Naive thymus-derived CD4-positive, alpha-beta T cell (primary cell): ENCODE measurements at regions of chr6 and their contacts with region 1.

Region 1: DNA sequence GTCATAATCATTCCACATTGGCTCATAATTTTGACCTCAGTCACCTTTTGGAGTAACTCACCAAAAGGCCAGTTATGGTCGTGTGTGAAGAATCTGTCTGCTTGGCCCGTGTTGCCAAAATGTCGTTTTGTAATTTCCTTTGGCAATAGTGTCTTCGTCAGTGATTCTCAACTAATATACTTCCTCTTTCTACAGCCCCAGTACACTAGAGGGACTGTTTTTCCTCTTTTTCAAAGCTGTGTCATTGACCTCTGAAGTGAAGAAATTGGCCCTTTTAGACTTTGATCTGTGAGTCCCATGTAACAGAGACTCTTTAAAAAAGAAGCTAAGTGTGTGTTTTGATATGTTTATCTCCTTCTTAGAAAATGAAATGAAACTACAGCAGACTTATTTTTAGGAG is 5.2 kb downstream of the FOXO3 start:
- DNase-seq: no peak
- ATAC-seq: peak; percentile 59
- H3K4me3 ChIP-seq: no peak overlapping the region
- H3K4me3 Mint-ChIP-seq: peak overlapping the region in 9 of 10 donors; percentile 8 to 75 (median 62)
- H3K27ac ChIP-seq: no peak overlapping the region
- H3K27ac Mint-ChIP-seq: peak overlapping the region in 8 of 9 donors; percentile 0 to 84 (median 48)
- H3K4me1 ChIP-seq: peaks cover 32 to 36% of the 10 kb centered on the region in 2 donors
- H3K4me1 Mint-ChIP-seq: peaks cover 46 to 81% (median 68%) of the 10 kb centered on the region in 7 donors
- H3K27me3 ChIP-seq: no peaks in the 10 kb centered on the region
- H3K27me3 Mint-ChIP-seq: peaks cover 0 to 41% (median 0%) of the 10 kb centered on the region in 5 donors

Region 2: GRCh38 chr6:108432792-108433191 is 133.1 kb before region 1 on chr6:
- CTCF ChIA-PET with region 1: no interaction called
- POLR2A ChIA-PET with region 1: no interaction called
- intact Hi-C with region 1: no loop called
- DNase-seq: peak in 1 of 9 donors; percentile 2
- ATAC-seq: no peak
- H3K4me3 ChIP-seq: no peak overlapping the region
- H3K4me3 Mint-ChIP-seq: no peak overlapping the region
- H3K27ac ChIP-seq: no peak overlapping the region
- H3K27ac Mint-ChIP-seq: no peak overlapping the region
- H3K4me1 ChIP-seq: peaks cover 0 to 3% of the 10 kb centered on the region in 2 donors
- H3K4me1 Mint-ChIP-seq: peaks cover 0 to 11% (median 5%) of the 10 kb centered on the region in 7 donors
- H3K27me3 ChIP-seq: no peaks in the 10 kb centered on the region
- H3K27me3 Mint-ChIP-seq: peaks cover 0 to 37% (median 0%) of the 10 kb centered on the region in 5 donors

Region 3: GRCh38 chr6:108453597-108454185 is 112.2 kb before region 1 on chr6:
- CTCF ChIA-PET with region 1: no interaction called
- POLR2A ChIA-PET with region 1: no interaction called
- intact Hi-C with region 1: no loop called
- DNase-seq: no peak
- ATAC-seq: peak; percentile 31
- H3K4me3 ChIP-seq: no peak overlapping the region
- H3K4me3 Mint-ChIP-seq: no peak overlapping the region
- H3K27ac ChIP-seq: no peak overlapping the region
- H3K27ac Mint-ChIP-seq: no peak overlapping the region
- H3K4me1 ChIP-seq: no peaks in the 10 kb centered on the region
- H3K4me1 Mint-ChIP-seq: peaks cover 0 to 9% (median 3%) of the 10 kb centered on the region in 7 donors
- H3K27me3 ChIP-seq: no peaks in the 10 kb centered on the region
- H3K27me3 Mint-ChIP-seq: peaks cover 0 to 46% (median 4%) of the 10 kb centered on the region in 5 donors

Region 4: DNA sequence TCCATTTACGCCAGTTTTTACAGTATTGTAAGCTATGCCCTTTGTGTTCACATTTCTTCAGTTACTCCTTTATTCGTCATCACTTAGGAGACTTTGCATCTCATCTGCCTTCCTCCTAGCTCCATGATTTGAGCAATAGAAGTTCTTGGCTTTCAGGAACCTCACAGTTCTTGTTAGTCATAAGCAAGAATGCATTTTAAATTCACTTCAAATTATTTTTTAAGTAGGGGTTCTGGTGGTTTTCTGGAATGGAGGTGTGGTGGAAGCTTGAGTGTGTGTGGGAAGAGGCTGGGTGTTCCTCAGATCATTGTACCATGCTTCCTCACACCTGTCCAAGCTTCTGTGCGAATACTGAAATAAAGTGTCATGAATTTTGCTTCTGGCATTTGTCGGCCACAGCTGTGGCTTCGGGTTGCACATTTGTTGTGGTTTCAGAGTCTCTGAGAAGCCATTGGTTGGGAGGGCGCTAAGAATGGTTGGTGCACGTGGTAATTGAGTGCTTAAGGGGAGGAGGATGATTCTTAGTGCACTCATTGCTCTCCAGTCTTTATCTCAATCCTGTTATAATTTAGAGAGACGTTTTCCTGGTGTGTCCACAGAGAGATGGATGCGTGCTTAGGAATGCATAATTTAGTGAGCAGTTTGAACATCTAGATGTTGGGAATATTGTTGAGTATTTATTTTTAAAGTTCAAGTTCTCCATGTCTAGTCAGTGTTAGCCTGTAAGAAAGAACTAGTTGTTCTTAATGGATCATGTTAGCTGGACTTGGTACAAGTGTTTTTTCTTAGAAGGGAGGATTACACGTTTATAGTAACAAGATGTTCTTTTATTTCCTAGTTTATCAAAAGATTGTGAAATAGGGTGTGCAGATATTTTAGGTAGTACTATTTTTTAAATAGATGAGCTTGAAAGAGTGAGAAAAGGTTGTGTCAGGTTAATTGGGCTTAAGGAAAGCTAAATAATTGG is 26.8 kb after region 1 on chr6:
- CTCF ChIA-PET with region 1: interaction called, 3 read pairs
- POLR2A ChIA-PET with region 1: interaction called, 4 read pairs
- intact Hi-C with region 1: loop called in 1 of 2 experiments (anchors 2 kb)
- DNase-seq: peak in 7 of 9 donors; percentile 24 to 50 (median 37)
- ATAC-seq: peak; percentile 84
- H3K4me3 ChIP-seq: no peak overlapping the region
- H3K4me3 Mint-ChIP-seq: peak overlapping the region; percentile 19 to 61 (median 36)
- H3K27ac ChIP-seq: no peak overlapping the region
- H3K27ac Mint-ChIP-seq: peak overlapping the region in 3 of 9 donors; percentile 33 to 50 (median 44)
- H3K4me1 ChIP-seq: peaks cover 26 to 29% of the 10 kb centered on the region in 2 donors
- H3K4me1 Mint-ChIP-seq: peaks cover 28 to 86% (median 73%) of the 10 kb centered on the region in 7 donors
- H3K27me3 ChIP-seq: no peaks in the 10 kb centered on the region
- H3K27me3 Mint-ChIP-seq: peaks cover 0 to 12% (median 0%) of the 10 kb centered on the region in 5 donors

Region 5: GRCh38 chr6:108627692-108628550 is 62.0 kb after region 1 on chr6:
- CTCF ChIA-PET with region 1: no interaction called
- POLR2A ChIA-PET with region 1: no interaction called
- intact Hi-C with region 1: no loop called
- DNase-seq: no peak
- ATAC-seq: no peak
- H3K4me3 ChIP-seq: no peak overlapping the region
- H3K4me3 Mint-ChIP-seq: no peak overlapping the region
- H3K27ac ChIP-seq: no peak overlapping the region
- H3K27ac Mint-ChIP-seq: peak overlapping the region in 1 of 9 donors; percentile 26
- H3K4me1 ChIP-seq: peaks cover 14 to 17% of the 10 kb centered on the region in 2 donors
- H3K4me1 Mint-ChIP-seq: peaks cover 35 to 83% (median 76%) of the 10 kb centered on the region in 7 donors
- H3K27me3 ChIP-seq: no peaks in the 10 kb centered on the region
- H3K27me3 Mint-ChIP-seq: no peaks in the 10 kb centered on the region